Posterior cingulate gyrus (tissue), 11 donors: ENCODE measurements at regions of chr14 and their contacts with region 1.

Region 1: DNA sequence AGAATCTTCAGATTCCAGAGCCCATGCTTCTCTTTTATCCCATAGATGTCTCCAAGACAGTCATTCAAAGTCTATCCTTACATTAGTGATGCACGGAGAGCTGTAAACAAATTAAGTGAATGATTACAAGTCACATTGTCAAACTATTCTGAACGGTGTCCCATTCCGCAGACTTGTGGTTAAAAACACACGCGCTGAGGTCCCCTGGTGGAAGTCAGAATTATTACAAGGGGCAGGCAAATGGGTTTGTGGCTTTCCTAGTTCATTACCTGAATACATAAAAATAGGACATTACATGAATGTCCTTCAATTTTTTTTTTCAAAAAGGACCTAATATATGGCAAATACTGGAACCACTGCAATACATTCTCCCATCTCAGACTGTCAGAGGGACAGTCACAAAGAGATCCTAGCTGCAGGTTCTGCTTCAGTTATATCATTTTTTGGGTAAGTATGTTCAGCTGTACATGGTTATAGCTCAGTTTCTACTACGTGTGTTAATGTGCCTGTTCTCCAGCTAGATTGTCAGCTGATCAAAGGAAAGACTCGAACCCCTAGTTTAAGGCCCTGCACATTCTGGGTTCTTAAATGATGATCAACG is 53.1 kb upstream of the STON2 start:
- DNase-seq: peak in 6 of 10 donors; percentile 36 to 91 (median 61)

Region 2: DNA sequence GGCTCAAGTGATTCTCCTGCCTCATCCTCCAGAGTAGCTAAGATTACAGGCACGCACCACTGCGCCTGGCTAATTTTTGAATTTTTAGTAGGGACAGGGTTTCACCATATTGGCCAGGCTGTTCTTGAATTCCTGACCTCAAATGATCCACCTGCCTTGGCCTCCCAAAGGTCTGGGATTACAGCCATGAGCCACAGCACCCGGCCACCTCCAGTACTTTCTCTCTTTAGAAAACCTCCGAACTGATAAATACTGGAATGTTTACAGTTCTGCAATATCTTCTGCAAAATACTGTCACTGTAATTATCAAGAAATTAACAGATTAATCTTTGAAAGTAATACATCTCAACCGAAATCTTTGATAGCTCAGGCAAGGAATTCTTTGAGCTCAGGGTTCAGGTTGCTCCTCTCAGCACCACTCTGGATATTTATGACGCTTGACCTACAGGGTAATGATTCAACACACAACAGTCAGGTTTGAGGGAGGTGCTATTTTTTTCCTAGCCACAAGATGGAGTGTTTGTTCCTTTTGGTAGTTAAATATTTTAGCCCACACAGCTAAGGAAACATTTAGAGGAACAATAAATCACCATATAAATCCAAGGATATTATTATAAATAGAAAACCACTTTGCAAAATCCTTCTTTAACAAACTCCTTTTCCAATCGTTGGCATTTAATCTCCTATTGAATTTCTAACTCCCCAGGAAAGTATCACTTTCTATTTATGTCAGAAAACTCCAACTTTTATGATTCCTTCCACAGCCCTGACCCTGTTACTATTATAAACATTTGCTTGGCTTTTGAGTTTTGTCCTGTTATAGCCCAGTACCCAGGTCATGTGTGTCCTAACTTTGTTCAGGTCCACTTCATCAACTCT is 183.9 kb before region 1 on chr14:
- intact Hi-C with region 1: loop called (anchors 1 kb)
- DNase-seq: no peak